ENCODE measurements at regions of chr9 and their contacts with region 1.

Region 1: GRCh38 chr9:86262452-86262851 is 3.0 kb upstream of the C9orf153 start:
- DNase-seq: no peak
- H3K4me3 ChIP-seq: no peak overlapping the region
- H3K27ac ChIP-seq: no peak overlapping the region
- H3K4me1 ChIP-seq: peaks cover 0 to 3% of the 10 kb centered on the region in 2 experiments; a peak in 1 of 4 replicates
- H3K27me3 ChIP-seq: no peaks in the 10 kb centered on the region
- CTCF ChIP-seq: no peak
- EP300 ChIP-seq: no peak
- RAD21 ChIP-seq: no peak

Region 2: GRCh38 chr9:86275962-86276361 is 13.5 kb after region 1 on chr9:
- CTCF ChIA-PET with region 1: interaction called, 10 read pairs
- POLR2A ChIA-PET with region 1: no interaction called
- DNase-seq: no peak
- H3K4me3 ChIP-seq: no peak overlapping the region
- H3K27ac ChIP-seq: no peak overlapping the region
- H3K4me1 ChIP-seq: peaks cover 7 to 15% of the 10 kb centered on the region in 2 experiments; a peak in 3 of 4 replicates
- H3K27me3 ChIP-seq: no peaks in the 10 kb centered on the region
- CTCF ChIP-seq: peak; percentile 34
- EP300 ChIP-seq: no peak
- RAD21 ChIP-seq: peak; percentile 57